ENCODE measurements at regions of chr4 and their contacts with region 1.

Region 1: DNA sequence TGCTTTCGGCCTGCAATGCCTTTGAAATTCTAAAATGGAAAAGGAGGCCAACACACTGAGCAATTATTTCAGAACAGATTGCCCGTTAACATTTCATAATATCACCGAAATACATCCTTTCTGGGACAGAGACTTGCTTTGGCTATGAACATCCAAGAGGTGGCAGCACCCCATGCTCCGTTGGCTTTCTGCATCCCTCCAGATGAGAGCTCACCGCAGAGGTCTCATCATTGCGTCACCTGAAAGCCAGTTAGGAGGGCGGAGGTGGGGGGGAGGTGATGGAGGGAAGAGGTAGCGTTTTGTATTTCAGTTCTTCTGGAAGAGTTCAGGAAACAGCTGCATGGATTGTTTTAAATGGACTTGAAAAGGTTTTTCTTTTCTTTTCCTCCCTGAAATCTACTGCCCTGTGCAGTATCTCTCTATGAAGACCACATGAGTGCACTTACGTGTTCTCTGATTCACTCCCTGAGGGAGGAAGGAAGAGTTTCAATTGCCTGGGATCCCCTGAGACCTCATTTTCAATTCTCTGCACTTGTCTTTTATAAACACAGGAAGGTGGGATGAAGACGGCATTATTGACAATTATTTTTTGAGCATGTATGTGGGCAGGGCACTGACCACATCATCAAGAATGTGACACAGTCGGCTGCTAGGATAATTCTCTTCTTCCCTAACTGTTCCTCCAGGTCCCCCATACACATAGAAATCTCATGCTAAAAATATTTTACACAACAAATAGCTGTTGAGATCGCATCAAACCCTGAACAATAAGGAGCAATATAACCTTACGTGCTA is 166.9 kb upstream of the PGRMC2 start:
- H3K4me3 ChIP-seq: no peak overlapping the region
- H3K27ac ChIP-seq: no peak overlapping the region
- H3K4me1 ChIP-seq: no peaks in the 10 kb centered on the region
- CTCF ChIP-seq: peak; percentile 72

Region 2: DNA sequence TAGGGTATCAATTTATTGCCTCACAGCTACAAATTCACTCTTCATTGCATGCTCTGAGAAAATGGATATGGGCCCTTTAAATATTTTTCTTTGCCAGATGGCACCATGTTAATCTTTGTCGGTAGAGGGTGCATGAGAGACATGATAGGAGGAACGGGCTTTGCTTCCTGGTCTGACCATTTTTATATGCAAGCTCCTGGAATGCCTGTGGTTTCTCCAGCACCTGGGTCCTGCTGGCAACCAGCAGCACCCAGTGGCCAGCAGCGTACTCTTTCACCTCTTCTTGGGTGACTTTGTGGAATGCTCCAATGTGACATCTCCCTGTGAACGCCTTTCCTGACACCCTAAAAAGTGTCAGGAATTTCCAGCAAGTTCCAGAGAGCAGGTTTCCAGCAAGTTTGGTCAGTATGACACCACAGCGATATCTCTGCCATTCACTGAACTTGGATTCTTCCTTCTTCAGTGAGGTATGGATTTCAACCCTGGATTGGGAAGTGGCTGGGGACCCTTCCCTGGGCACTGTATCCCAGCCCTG is 26.6 kb before region 1 on chr4:
- CTCF ChIA-PET with region 1: interaction called, 12 read pairs
- POLR2A ChIA-PET with region 1: no interaction called
- H3K4me3 ChIP-seq: no peak overlapping the region; the same call in 1 of the 2 replicates
- H3K27ac ChIP-seq: no peak overlapping the region
- H3K4me1 ChIP-seq: no peaks in the 10 kb centered on the region
- CTCF ChIP-seq: peak; percentile 46; the same call in 1 of the 2 replicates

Region 3: DNA sequence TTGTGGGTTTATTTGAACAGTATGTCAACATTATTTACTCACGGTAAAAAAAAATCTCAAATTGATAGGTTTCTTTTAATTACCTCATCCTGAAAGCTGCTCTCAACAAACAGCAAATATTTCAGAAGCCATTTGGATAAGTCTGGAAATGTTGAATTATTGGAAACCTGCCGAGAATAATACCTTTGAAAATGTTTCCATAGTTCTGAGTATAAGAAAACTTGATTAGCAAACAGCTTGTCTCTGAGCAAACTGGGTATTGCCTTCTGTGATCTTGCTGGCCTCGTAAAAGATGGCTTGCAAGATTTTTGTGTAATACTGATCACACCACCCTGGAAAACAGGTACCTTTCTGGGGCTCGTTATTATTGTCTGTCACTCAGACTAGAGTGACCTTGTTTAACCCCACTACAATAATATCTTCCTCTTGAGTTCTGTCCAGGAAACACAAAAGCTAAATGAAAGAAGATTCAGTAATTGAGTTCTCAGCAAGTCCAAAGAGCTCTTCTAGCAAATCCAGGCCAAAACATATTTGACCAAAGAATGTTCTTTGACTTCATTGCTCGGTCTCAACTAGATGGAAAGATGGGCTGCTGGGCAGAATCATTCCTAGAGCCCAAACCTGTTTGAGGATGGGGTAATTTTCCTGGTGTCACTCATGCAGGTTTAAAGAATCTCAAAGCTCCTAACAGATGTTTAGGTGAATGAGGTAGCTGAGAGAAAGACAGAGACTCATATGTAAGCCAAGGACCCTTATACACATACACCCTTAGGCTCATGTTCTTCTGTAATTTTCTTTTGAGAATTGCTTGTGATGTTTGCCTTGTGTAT is 99.4 kb after region 1 on chr4:
- CTCF ChIA-PET with region 1: interaction called, 8 read pairs
- POLR2A ChIA-PET with region 1: interaction called, 10 read pairs
- H3K4me3 ChIP-seq: no peak overlapping the region
- H3K27ac ChIP-seq: peak overlapping the region; percentile 69
- H3K4me1 ChIP-seq: peaks cover 6% of the 10 kb centered on the region; the same call in 1 of the 2 replicates
- CTCF ChIP-seq: no peak

Region 4: DNA sequence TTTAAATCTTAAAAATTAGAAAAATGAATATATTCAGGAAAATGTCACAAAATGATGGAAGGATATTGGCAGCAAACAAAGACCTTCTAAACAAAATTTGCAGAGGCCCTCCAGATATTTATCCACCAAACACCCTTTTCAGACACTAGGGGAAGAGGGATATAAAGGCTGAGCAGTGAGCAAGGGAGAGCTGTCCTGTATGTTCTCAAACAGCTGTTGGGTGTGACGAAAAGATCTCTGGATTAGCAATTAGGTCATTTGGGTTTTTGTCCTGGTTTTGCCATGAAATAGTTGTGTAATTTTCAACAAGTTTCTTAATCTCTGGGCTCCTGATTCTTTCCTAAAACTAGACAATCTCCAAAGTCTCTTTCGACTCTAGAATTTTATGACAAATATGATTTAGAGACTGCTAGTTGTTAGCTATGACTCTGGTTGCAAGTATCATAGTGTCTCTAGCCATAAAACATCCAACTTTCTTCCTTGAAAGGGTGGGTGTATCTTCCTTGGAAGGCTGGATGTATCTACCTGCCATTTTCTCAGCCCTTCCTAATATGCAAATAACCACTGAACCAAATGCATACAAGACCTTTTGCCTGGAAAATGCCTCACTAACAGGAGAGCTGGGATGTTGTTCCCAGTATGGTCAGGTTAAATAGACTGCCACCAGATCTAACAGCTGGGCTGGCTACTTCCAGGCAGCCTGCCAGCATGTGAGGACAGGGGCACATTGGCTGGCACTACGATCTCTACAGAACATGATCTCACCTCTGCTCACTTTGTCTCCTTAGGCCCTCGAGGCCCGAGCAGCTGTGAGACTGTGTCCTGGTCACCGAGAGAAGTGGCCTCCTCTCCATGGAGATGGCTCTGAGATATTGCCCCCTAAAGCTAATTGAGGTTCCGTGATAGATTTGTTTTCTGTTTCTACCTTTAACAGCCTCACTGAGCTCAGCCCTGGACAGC is 129.6 kb after region 1 on chr4:
- CTCF ChIA-PET with region 1: no interaction called
- POLR2A ChIA-PET with region 1: no interaction called
- H3K4me3 ChIP-seq: no peak overlapping the region
- H3K27ac ChIP-seq: no peak overlapping the region
- H3K4me1 ChIP-seq: no peaks in the 10 kb centered on the region
- CTCF ChIP-seq: no peak

Measured in HEK293 (cell line).